Natural killer cell (primary cell): ENCODE measurements at regions of chr10 and their contacts with region 1.

Region 1: GRCh38 chr10:111440501-111440900 is 363.7 kb downstream of the ADRA2A start:
- DNase-seq: no peak
- ATAC-seq: no peak
- H3K4me3 ChIP-seq: no peak overlapping the region
- H3K4me3 Mint-ChIP-seq: no peak overlapping the region
- H3K27ac ChIP-seq: no peak overlapping the region
- H3K27ac Mint-ChIP-seq: no peak overlapping the region
- H3K4me1 ChIP-seq: no peaks in the 10 kb centered on the region
- H3K4me1 Mint-ChIP-seq: no peaks in the 10 kb centered on the region
- H3K27me3 ChIP-seq: no peaks in the 10 kb centered on the region
- H3K27me3 Mint-ChIP-seq: no peaks in the 10 kb centered on the region
- CTCF ChIP-seq: no peak

Region 2: GRCh38 chr10:111504376-111504775 is 63.9 kb after region 1 on chr10:
- intact Hi-C with region 1: no loop called
- DNase-seq: no peak
- ATAC-seq: no peak
- H3K4me3 ChIP-seq: no peak overlapping the region
- H3K4me3 Mint-ChIP-seq: no peak overlapping the region
- H3K27ac ChIP-seq: no peak overlapping the region
- H3K27ac Mint-ChIP-seq: no peak overlapping the region
- H3K4me1 ChIP-seq: no peaks in the 10 kb centered on the region
- H3K4me1 Mint-ChIP-seq: no peaks in the 10 kb centered on the region
- H3K27me3 ChIP-seq: no peaks in the 10 kb centered on the region
- H3K27me3 Mint-ChIP-seq: no peaks in the 10 kb centered on the region
- CTCF ChIP-seq: no peak

Region 3: GRCh38 chr10:111756217-111757061 is 315.9 kb after region 1 on chr10:
- intact Hi-C with region 1: no loop called
- DNase-seq: peak in 1 of 2 donors; percentile 10
- ATAC-seq: no peak
- H3K4me3 ChIP-seq: no peak overlapping the region
- H3K4me3 Mint-ChIP-seq: no peak overlapping the region
- H3K27ac ChIP-seq: no peak overlapping the region
- H3K27ac Mint-ChIP-seq: no peak overlapping the region
- H3K4me1 ChIP-seq: no peaks in the 10 kb centered on the region
- H3K4me1 Mint-ChIP-seq: no peaks in the 10 kb centered on the region
- H3K27me3 ChIP-seq: no peaks in the 10 kb centered on the region
- H3K27me3 Mint-ChIP-seq: no peaks in the 10 kb centered on the region
- CTCF ChIP-seq: no peak

Region 4: DNA sequence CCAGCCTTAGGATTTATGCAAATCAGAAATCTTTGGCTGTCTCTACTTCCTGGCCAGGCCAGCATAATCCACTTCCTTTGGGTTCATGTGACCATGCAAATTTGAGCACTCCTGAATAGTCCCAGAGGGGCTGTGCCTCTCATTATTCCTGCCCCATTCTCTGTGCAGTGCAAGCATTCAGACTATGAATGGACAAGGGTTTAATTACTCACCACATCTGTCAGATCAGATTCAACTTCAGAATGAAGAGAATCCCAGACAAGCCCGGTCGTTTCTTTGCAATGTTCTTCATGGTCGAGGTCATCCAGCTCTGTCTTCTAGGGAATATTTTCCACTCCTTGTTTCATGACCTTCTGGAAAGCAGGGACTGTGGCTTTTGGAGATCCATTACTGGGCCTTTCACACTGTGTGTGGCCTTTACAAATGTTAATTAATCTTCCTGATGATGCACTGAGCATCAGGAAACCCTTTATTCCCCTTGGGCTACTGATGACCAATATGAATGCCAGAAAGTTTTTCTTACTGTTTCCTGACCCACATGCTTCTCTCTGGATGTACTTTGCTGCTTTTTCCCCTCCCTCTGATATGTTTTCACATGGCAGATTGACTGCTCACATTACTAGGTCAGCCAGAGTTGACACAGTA is 1291.9 kb after region 1 on chr10:
- intact Hi-C with region 1: loop called (anchors 10 kb)
- DNase-seq: no peak
- ATAC-seq: no peak
- H3K4me3 ChIP-seq: no peak overlapping the region
- H3K4me3 Mint-ChIP-seq: no peak overlapping the region
- H3K27ac ChIP-seq: no peak overlapping the region
- H3K27ac Mint-ChIP-seq: no peak overlapping the region
- H3K4me1 ChIP-seq: no peaks in the 10 kb centered on the region
- H3K4me1 Mint-ChIP-seq: peaks cover 0 to 6% of the 10 kb centered on the region in 2 donors
- H3K27me3 ChIP-seq: no peaks in the 10 kb centered on the region
- H3K27me3 Mint-ChIP-seq: no peaks in the 10 kb centered on the region
- CTCF ChIP-seq: no peak